Cardiac septum (tissue), 1 donor: ENCODE measurements at regions of chr5 and their contacts with region 1.

Region 1: DNA sequence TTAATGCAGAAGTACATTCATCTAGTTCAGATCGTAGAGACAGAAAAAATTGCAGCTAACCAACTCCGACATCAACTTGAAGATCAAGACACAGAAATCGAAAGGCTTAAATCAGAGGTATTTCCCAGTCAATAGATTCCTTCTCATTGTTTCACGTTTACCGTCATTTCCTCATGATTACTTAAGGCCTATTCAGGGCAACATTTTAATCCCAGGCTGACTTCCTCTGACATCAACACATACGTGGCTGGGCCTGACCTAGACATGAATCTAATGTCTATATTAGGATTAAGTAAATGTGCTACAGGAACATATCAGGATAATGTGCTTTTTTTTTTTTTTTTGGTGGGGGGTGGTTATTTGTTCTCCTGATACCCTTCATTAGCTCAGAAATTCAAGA is 107.9 kb downstream of the RASGRF2 start:
- DNase-seq: no peak

Region 2: GRCh38 chr5:80960531-80961375 is 107.3 kb before region 1 on chr5:
- intact Hi-C with region 1: loop called (anchors 5 kb)
- DNase-seq: no peak

Region 3: GRCh38 chr5:80975065-80975464 is 93.0 kb before region 1 on chr5:
- intact Hi-C with region 1: loop called (anchors 5 kb)
- DNase-seq: no peak